ENCODE measurements at regions of chr15 and their contacts with region 1.

Region 1: DNA sequence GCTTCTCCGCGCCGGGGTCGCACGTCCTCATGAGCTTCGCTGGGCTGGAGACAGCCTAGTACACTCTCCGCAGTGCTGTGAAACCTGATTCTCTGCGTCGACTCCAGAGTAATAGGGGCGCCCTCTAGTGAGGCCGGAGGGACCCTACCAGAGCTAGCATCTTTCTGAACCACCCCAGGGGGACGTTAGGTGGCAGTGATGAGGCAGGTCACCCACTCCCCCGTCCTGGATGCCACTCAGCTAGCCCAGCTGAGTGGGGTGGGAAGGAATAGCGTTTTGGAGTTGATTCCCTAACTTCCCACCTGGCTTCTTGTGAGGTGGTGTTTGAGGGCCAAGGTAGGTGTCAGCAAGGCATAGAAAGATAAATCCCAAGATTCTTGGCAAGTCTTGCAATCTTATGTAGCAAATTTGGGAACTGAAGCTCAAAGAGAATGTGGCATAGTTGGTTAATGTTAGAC is 4.0 kb downstream of the DUOXA2 start:
- DNase-seq: peak; percentile 90
- H3K4me3 Mint-ChIP-seq: peak overlapping the region; percentile 43
- H3K27ac Mint-ChIP-seq: no peak overlapping the region
- H3K4me1 Mint-ChIP-seq: peaks cover 24% of the 10 kb centered on the region
- H3K27me3 Mint-ChIP-seq: peaks cover 94% of the 10 kb centered on the region

Region 2: DNA sequence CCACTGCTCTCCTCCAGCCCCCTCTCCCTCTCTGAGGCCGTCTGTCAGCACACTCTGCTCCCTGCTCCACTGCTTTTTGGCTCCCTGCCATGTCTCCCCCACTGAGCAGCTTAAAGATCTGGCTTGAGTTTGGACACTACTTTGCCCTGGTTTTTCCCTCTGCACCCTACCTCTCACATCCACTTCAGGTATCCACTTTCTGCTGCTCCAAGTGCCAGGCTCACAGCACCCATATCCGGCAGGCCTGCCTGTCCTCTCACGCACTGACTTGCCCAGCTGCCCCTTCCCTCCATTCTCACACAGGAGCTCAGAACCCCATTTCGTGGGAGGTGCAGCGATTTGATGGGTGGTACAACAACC is 15.4 kb after region 1 on chr15:
- CTCF ChIA-PET with region 1: interaction called, 23 read pairs
- DNase-seq: no peak
- H3K4me3 Mint-ChIP-seq: no peak overlapping the region
- H3K27ac Mint-ChIP-seq: no peak overlapping the region
- H3K4me1 Mint-ChIP-seq: peaks cover 11% of the 10 kb centered on the region
- H3K27me3 Mint-ChIP-seq: peaks cover 89% of the 10 kb centered on the region

Region 3: GRCh38 chr15:45221053-45221599 is 103.0 kb after region 1 on chr15:
- CTCF ChIA-PET with region 1: no interaction called
- DNase-seq: no peak
- H3K4me3 Mint-ChIP-seq: no peak overlapping the region
- H3K27ac Mint-ChIP-seq: no peak overlapping the region
- H3K4me1 Mint-ChIP-seq: no peaks in the 10 kb centered on the region
- H3K27me3 Mint-ChIP-seq: peaks cover 22% of the 10 kb centered on the region

Measured in activated naive CD4-positive, alpha-beta T cell treated with anti-CD3 and anti-CD28 coated beads, Interleukin-2, amount 10 ng/mL, durations not matched to agents 7 days and 5 days (primary cell).